Breast epithelium (tissue), 4 donors: ENCODE measurements at regions of chr4 and their contacts with region 1.

Region 1: DNA sequence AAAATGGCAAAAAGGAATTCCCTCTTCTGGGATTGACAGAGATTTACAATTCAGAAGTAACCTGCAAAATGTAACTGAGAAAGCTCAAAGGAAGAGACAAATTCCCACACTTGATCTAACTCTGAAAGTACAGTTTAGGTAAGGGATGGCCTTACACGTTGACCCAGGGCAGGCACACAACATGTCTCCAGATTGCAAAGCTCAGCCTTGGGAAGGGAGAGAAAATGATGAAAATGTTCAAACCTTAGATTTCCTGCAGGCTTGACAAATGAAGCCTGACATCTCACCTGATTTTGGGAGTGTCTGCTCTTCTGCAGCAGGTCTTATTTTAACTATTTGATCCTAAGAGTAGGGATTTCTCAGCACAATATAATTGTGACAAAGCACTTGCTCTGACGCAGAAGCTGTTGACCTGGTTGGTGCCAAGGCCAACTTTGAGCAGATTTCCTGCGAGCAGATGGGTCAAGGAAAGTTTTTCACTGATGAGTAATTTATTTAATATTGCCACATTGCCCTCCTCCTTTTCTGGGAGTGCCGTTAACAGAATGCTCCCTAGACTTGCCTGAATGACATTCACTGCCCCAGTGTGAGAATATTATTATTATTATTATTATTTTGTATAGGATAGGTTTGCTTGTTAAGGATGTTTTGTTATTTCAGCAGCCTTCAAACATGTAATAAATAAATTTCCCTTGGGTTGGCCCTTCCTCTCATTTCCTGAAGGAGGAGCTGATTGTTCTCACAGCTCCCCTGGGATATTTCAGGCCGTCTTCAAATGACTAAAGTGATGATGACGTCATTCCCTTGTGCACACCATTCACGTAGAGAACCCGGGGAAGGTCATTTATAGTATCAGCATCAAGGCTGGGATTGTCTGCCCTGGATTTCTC is 157.1 kb downstream of the VEGFC start:
- DNase-seq: no peak
- H3K4me3 ChIP-seq: no peak overlapping the region
- H3K27ac ChIP-seq: no peak overlapping the region
- H3K4me1 ChIP-seq: no peaks in the 10 kb centered on the region
- H3K27me3 ChIP-seq: no peaks in the 10 kb centered on the region
- CTCF ChIP-seq: no peak
- POLR2A ChIP-seq: no peak

Region 2: DNA sequence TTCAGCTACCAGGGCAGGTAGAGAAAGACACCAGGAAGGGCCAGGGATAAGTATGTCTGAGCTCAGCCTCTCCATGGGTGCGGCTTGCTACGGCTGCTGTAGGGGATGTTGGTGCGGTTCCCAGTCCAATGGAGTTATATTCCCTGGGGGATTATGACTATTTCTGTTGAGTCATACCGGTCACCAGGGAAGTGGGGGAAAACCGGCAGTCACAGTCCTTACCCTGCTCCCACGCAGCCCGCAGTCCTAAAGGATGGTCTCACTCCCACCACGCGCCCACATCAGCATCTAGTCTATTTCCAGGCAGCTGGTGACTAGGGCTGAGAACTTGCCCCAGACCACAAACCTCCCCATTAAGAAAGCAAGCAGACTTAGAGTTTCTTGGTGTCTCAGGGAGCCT is 34.5 kb before region 1 on chr4:
- intact Hi-C with region 1: no loop called
- DNase-seq: no peak
- H3K4me3 ChIP-seq: no peak overlapping the region
- H3K27ac ChIP-seq: no peak overlapping the region
- H3K4me1 ChIP-seq: no peaks in the 10 kb centered on the region
- H3K27me3 ChIP-seq: no peaks in the 10 kb centered on the region
- CTCF ChIP-seq: no peak
- POLR2A ChIP-seq: no peak

Region 3: GRCh38 chr4:176957353-176958118 is 321.9 kb after region 1 on chr4:
- intact Hi-C with region 1: loop called (anchors 5 kb)
- DNase-seq: no peak
- H3K4me3 ChIP-seq: no peak overlapping the region
- H3K27ac ChIP-seq: no peak overlapping the region
- H3K4me1 ChIP-seq: no peaks in the 10 kb centered on the region
- H3K27me3 ChIP-seq: no peaks in the 10 kb centered on the region
- CTCF ChIP-seq: no peak
- POLR2A ChIP-seq: no peak